H1 (cell line): ENCODE measurements at regions of chr17 and their contacts with region 1.

Region 1: GRCh38 chr17:59914274-59914854 is 21.4 kb downstream of the RPS6KB1 start:
- DNase-seq: no peak
- H3K4me3 ChIP-seq: no peak overlapping the region
- H3K27ac ChIP-seq: no peak overlapping the region
- H3K4me1 ChIP-seq: no peaks in the 10 kb centered on the region
- H3K27me3 ChIP-seq: no peaks in the 10 kb centered on the region
- CTCF ChIP-seq: peak in 2 of 3 experiments; percentile 22 to 34; a peak in 2 of 4 replicates
- EP300 ChIP-seq: no peak
- POLR2A ChIP-seq: no peak
- RAD21 ChIP-seq: peak; percentile 46 to 48

Region 2: DNA sequence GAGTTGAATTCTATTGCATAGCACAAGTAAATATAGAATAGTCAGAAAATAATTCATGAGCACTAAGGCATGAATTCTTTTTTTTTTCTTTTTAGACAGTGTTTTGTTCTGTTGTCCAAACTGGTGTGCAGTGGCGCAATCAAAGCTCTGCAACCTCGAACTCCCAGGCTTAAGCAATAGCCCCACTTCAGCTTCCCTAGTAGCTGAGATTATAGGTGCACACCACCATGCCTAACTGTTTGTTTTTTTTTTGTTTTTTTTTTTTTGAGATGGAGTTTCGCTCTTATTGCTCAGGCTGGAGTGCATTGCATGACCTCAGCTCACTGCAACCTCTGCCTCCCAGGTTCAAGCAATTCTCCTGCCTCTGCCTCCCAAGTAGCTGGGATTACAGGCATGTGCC is 38.3 kb before region 1 on chr17:
- CTCF ChIA-PET with region 1: no interaction called
- POLR2A ChIA-PET with region 1: no interaction called
- DNase-seq: no peak
- H3K4me3 ChIP-seq: no peak overlapping the region
- H3K27ac ChIP-seq: no peak overlapping the region
- H3K4me1 ChIP-seq: no peaks in the 10 kb centered on the region
- H3K27me3 ChIP-seq: no peaks in the 10 kb centered on the region
- CTCF ChIP-seq: no peak
- EP300 ChIP-seq: no peak
- POLR2A ChIP-seq: no peak
- RAD21 ChIP-seq: no peak

Region 3: DNA sequence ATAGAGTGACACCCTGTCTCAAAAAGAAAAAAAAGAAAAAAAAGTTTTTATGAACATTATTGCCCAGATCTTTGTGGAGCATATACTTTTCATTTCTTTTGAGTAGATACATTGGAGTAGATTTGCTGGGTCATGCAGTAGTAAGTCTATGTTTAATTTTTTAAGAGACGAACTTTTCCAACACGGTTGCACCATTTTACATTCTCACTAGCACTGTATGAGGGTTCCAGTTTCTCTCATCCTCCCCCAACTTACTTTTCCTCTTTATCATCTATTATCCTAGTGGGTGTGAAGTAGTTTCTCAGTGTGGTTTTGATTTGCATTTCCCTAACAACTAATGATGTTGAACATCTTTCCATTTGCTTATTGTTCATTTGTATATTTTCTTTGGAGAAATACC is 10.9 kb before region 1 on chr17:
- CTCF ChIA-PET with region 1: interaction called, 22 read pairs
- POLR2A ChIA-PET with region 1: no interaction called
- DNase-seq: no peak
- H3K4me3 ChIP-seq: no peak overlapping the region
- H3K27ac ChIP-seq: no peak overlapping the region
- H3K4me1 ChIP-seq: no peaks in the 10 kb centered on the region
- H3K27me3 ChIP-seq: no peaks in the 10 kb centered on the region
- CTCF ChIP-seq: no peak
- EP300 ChIP-seq: no peak
- POLR2A ChIP-seq: no peak
- RAD21 ChIP-seq: no peak

Region 4: GRCh38 chr17:59941131-59941530 is 26.8 kb after region 1 on chr17:
- CTCF ChIA-PET with region 1: interaction called, 15 read pairs
- POLR2A ChIA-PET with region 1: no interaction called
- DNase-seq: no peak
- H3K4me3 ChIP-seq: no peak overlapping the region
- H3K27ac ChIP-seq: no peak overlapping the region
- H3K4me1 ChIP-seq: no peaks in the 10 kb centered on the region
- H3K27me3 ChIP-seq: no peaks in the 10 kb centered on the region
- CTCF ChIP-seq: no peak
- EP300 ChIP-seq: no peak
- POLR2A ChIP-seq: no peak
- RAD21 ChIP-seq: no peak